B cell (primary cell): ENCODE measurements at regions of chr12 and their contacts with region 1.

Region 1: GRCh38 chr12:57904848-57905811 is 36.2 kb upstream of the ATP23 start:
- DNase-seq: peak; percentile 90
- ATAC-seq: peak; percentile 100
- H3K4me3 ChIP-seq: peak overlapping the region in 3 of 5 experiments; percentile 18 to 32 (median 29)
- H3K4me3 Mint-ChIP-seq: peak overlapping the region; percentile 68
- H3K27ac ChIP-seq: no peak overlapping the region
- H3K27ac Mint-ChIP-seq: peak overlapping the region; percentile 50
- H3K4me1 ChIP-seq: peaks cover 3 to 6% of the 10 kb centered on the region in 2 donors
- H3K4me1 Mint-ChIP-seq: peaks cover 8% of the 10 kb centered on the region
- H3K27me3 ChIP-seq: peaks cover 0 to 9% (median 4%) of the 10 kb centered on the region in 4 experiments
- H3K27me3 Mint-ChIP-seq: peaks cover 22% of the 10 kb centered on the region
- CTCF ChIP-seq: peak; percentile 100

Region 2: DNA sequence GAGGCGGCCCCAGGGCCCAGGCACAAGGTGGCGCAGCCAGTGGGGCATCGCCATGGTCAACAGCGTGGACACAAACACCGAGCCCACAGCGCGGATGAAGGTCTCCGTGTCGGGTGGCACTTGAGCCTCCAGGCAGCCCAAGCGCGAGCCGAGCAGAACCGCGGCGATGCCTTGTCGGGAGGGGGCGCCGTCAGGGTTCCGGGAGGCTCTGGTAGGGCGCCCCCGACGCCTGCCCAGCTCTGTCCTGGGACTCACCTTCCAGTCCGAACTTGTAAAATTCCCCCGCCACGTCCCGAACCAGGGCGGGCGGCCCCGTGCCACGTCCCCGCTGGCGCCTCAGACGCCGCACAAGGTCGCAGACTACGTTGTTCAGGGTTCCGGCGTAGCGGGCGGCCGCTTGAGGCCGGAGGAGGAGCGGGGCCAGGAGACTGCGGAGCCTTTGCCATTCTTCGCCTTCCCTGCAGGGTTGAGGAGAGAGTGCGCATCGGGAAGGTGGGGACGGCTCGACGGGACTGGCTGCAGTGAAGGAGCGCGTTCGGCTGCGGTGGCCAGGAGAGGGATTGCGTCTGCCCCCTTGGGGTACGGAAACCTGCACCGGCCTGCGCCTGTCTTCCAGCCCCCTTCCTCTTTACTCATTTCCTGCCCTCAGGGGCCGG is 140.0 kb before region 1 on chr12:
- CTCF ChIA-PET with region 1: interaction called, 13 read pairs
- POLR2A ChIA-PET with region 1: interaction called, 4 read pairs
- intact Hi-C with region 1: no loop called
- DNase-seq: peak; percentile 68
- ATAC-seq: peak; percentile 78
- H3K4me3 ChIP-seq: peak overlapping the region; percentile 22 to 63 (median 58)
- H3K4me3 Mint-ChIP-seq: peak overlapping the region; percentile 93
- H3K27ac ChIP-seq: no peak overlapping the region
- H3K27ac Mint-ChIP-seq: no peak overlapping the region
- H3K4me1 ChIP-seq: peaks cover 29 to 32% of the 10 kb centered on the region in 2 donors
- H3K4me1 Mint-ChIP-seq: peaks cover 32% of the 10 kb centered on the region
- H3K27me3 ChIP-seq: peaks cover 0 to 38% (median 26%) of the 10 kb centered on the region in 4 experiments
- H3K27me3 Mint-ChIP-seq: peaks cover 24% of the 10 kb centered on the region
- CTCF ChIP-seq: peak; percentile 57

Region 3: DNA sequence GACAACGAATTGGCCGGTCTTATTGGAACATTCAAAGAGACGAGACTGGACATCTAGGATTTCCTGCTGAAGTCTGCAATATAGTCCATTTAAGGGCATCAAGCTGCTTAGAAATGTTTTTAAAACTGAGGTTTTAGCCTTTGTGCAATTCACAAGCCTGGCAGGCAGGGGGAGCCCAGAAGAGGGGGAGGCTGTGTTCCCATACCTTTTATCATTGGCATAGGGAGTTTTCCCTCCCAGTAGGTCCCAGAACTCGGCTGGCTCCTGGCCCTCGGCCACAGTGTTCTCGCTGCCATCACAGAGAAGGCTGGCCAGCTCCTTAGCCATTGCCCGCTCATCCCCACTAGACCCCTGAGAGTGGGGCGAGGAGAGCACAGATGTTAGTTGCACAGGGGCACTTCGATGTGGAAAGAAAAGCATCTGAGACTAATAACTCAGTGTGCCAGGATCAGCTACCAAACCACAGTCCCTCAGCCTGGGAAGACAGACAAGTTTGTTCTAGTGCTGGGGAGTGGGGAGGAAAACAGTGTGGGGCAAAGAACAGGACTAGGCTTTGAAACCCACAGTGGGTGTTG is 101.7 kb before region 1 on chr12:
- CTCF ChIA-PET with region 1: interaction called, 121 read pairs
- POLR2A ChIA-PET with region 1: no interaction called
- intact Hi-C with region 1: loop called (anchors 1 kb)
- DNase-seq: peak; percentile 45
- ATAC-seq: peak; percentile 39
- H3K4me3 ChIP-seq: no peak overlapping the region
- H3K4me3 Mint-ChIP-seq: no peak overlapping the region
- H3K27ac ChIP-seq: no peak overlapping the region
- H3K27ac Mint-ChIP-seq: no peak overlapping the region
- H3K4me1 ChIP-seq: no peaks in the 10 kb centered on the region
- H3K4me1 Mint-ChIP-seq: no peaks in the 10 kb centered on the region
- H3K27me3 ChIP-seq: no peaks in the 10 kb centered on the region
- H3K27me3 Mint-ChIP-seq: no peaks in the 10 kb centered on the region
- CTCF ChIP-seq: peak; percentile 78

Region 4: DNA sequence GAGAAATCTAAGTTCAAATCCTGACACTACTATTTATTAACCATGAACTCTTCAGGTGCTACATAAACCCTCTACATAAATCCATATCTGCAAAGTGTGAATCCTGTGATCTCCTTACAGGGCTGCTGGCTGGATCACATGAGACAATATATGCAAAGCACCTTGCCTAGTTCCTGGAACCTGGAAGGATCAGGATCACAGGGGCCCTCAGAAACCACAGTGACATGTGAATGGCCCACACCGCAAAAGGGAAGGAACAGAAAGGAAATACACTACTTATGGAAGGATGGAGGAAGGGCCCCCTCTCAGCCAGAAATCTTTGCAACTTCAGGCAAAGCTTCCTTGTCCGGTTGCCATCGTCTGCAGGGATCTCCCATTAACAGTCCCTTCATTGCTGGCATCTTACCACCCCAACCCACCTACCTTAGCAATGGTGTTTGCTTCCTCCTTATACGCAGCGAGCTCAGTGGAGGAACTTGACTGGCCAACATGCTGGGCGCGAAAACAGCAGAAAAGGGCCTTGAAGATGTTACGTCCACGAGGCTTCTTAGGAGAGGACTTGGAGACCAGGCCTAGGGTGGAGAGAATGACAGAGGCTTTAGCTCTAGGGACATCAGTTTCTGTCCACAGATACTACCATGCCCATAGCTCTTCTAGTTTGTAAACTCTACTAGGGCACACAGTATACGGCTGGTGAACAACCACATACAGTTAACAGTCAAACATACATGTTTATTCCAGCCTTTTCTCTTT is 75.9 kb before region 1 on chr12:
- CTCF ChIA-PET with region 1: interaction called, 182 read pairs
- POLR2A ChIA-PET with region 1: interaction called, 9 read pairs
- intact Hi-C with region 1: loop called (anchors 1 kb)
- DNase-seq: no peak
- ATAC-seq: no peak
- H3K4me3 ChIP-seq: no peak overlapping the region
- H3K4me3 Mint-ChIP-seq: no peak overlapping the region
- H3K27ac ChIP-seq: no peak overlapping the region
- H3K27ac Mint-ChIP-seq: no peak overlapping the region
- H3K4me1 ChIP-seq: peaks cover 30 to 35% of the 10 kb centered on the region in 2 donors
- H3K4me1 Mint-ChIP-seq: peaks cover 35% of the 10 kb centered on the region
- H3K27me3 ChIP-seq: no peaks in the 10 kb centered on the region
- H3K27me3 Mint-ChIP-seq: no peaks in the 10 kb centered on the region
- CTCF ChIP-seq: no peak

Region 5: DNA sequence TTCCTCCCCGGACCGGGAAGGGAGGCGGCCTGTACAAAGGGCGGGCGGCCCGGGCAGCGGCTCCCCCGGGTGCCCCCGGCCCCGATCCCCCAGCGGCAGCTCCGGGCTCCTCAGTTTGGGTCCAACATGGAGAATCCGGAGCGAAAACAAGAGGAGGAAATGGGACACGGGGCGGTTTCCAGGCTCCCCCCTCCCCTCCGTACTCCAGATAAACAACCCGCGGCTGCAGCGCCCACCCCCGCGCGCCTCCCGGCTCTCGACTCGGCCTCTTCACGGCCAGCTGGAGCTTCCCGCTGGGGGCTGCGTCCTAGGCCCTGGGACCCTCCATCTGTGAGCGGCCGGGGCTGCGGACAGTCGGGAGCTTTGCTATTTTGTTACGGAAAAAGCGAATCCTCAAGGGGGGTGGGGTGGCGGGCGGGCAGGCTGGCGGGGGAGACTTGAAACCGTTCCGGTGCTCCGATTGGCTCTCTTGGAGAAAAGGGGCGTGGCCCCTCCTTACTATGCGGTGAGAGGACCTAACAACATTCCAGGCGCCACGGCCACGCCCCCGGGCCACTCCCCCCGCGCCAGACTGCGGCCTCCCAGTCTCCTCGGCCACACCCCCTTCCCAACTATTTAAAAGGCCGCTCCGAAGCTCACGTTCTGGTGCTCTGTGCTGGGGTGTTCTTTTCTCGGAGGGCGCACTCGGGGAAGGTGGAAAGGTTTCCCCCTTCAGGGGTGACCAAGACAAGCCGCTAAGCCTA is 58.4 kb before region 1 on chr12 and contains the start of gene CTDSP2:
- CTCF ChIA-PET with region 1: interaction called, 23 read pairs
- POLR2A ChIA-PET with region 1: no interaction called
- intact Hi-C with region 1: no loop called
- DNase-seq: peak; percentile 91
- ATAC-seq: peak; percentile 70
- H3K4me3 ChIP-seq: peak within 1 kb of the TSS; percentile 48 to 98 (median 93)
- H3K4me3 Mint-ChIP-seq: peak within 1 kb of the TSS; percentile 84
- H3K27ac ChIP-seq: peak within 1 kb of the TSS; percentile 75 to 84
- H3K27ac Mint-ChIP-seq: peak within 1 kb of the TSS; percentile 90
- H3K4me1 ChIP-seq: peaks cover 43 to 52% of the 10 kb centered on the region in 2 donors
- H3K4me1 Mint-ChIP-seq: peaks cover 47% of the 10 kb centered on the region
- H3K27me3 ChIP-seq: peaks cover 0 to 7% (median 1%) of the 10 kb centered on the region in 4 experiments
- H3K27me3 Mint-ChIP-seq: peaks cover 9% of the 10 kb centered on the region
- CTCF ChIP-seq: no peak
- total RNA-seq, gene CTDSP2: 203 and 209 TPM in 2 replicates